Activated T-helper 1 cell treated with anti-CD3 and anti-CD28 coated beads, Interleukin-12 subunit alpha, Interleukin-12 subunit beta, Interleukin-2, Interleukin-4 antibody, amounts not matched to agents 30 ng/mL and 10 ng/mL and 1 ng/mL, durations not matched to agents 14 hours and 24 hours and 36 hours (primary cell): ENCODE measurements at regions of chr17 and their contacts with region 1.

Region 1: GRCh38 chr17:5438716-5439445 is at the start of gene C1QBP:
- DNase-seq: peak; percentile 89
- H3K4me3 Mint-ChIP-seq: peak within 1 kb of the TSS; percentile 94
- H3K27ac Mint-ChIP-seq: peak within 1 kb of the TSS; percentile 87
- H3K4me1 Mint-ChIP-seq: peaks cover 40% of the 10 kb centered on the region
- H3K27me3 Mint-ChIP-seq: no peaks in the 10 kb centered on the region
- total RNA-seq, gene C1QBP: 410 and 413 TPM in 2 replicates

Region 2: GRCh38 chr17:5468075-5468473 is 29.2 kb after region 1 on chr17:
- intact Hi-C with region 1: loop called (anchors 1 kb)
- DNase-seq: no peak
- H3K4me3 Mint-ChIP-seq: peak overlapping the region; percentile 92
- H3K27ac Mint-ChIP-seq: peak overlapping the region; percentile 46
- H3K4me1 Mint-ChIP-seq: peaks cover 50% of the 10 kb centered on the region
- H3K27me3 Mint-ChIP-seq: no peaks in the 10 kb centered on the region